BJ (cell line): ENCODE measurements at regions of chr3 and their contacts with region 1.

Region 1: DNA sequence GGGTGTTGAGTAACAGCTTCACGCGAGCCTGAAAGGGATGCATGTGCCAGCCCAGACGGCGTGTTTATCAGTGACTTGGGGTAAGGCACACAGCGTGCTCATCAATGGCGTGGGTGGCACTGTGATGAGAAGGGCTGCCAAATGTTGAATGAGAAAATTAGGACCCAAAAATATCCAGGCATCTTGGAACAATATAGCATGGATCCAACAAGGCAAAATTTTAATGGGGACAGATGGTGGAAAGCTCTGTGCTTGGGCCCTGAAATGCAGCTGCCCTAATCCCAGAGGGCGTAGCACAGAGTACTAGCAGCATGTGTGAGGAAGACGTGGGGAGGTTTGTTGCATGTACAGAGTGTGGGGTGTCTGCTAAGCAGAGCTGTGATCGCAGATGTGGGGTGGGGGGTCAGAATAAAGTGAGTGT is 48.9 kb downstream of the SSUH2 start:
- DNase-seq: no peak
- H3K4me3 ChIP-seq: no peak overlapping the region
- H3K27me3 ChIP-seq: 0 out of 2 replicates have a peak, but pooled peaks cover 1% of the 10 kb centered on the region
- CTCF ChIP-seq: no peak

Region 2: DNA sequence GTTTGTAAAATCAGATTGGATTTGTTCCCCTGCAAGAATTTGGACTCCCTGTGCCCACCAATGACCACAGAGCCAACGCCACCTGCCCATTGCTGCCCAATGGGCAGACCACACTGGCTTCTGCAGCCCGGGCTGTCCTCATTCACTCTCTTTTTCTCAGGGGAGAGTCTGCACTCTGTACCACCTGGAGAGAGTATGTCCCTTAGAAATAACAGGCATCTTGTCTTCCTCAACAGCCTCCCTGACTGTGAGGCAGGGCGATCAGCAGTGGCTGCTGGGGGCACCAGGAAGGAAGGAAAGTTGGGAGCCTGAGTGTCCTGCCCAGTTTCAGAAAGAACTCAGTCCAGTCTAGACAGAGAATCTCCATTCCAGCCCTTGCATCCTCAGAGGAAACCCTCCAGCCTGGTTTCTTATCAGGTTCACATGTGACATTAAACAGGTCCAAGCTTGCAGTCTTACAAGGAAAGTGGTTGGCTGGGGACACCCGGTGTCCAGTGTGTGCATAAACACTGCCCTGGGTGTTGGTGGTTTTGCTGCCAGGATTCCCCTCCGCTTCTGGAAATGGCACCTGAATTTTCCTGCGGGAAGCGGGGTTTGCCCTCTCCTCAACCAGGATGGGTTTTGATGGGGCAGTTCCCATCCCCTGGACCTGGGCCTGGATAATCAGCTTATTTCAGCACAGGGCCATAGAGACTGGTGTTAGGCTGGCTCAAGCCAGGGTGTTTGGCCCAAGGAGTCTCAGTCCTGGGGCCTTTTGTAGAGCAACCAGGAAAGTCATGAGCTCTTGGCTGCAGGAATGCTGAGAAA is 11.7 kb after region 1 on chr3:
- CTCF ChIA-PET with region 1: interaction called, 11 read pairs
- POLR2A ChIA-PET with region 1: no interaction called
- DNase-seq: no peak
- H3K4me3 ChIP-seq: no peak overlapping the region
- H3K27me3 ChIP-seq: no peaks in the 10 kb centered on the region
- CTCF ChIP-seq: peak; percentile 75